Activated T-helper 1 cell treated with anti-CD3 and anti-CD28 coated beads, Interleukin-12 subunit alpha, Interleukin-12 subunit beta, Interleukin-2, Interleukin-4 antibody, amounts not matched to agents 30 ng/mL and 10 ng/mL and 1 ng/mL, durations not matched to agents 14 hours and 24 hours and 36 hours (primary cell): ENCODE measurements at regions of chr1 and their contacts with region 1.

Region 1: GRCh38 chr1:160098852-160099561 is 588 bp upstream of the IGSF8 start:
- DNase-seq: peak; percentile 93
- H3K4me3 Mint-ChIP-seq: peak overlapping the region; percentile 73
- H3K27ac Mint-ChIP-seq: peak overlapping the region; percentile 73
- H3K4me1 Mint-ChIP-seq: peaks cover 41% of the 10 kb centered on the region
- H3K27me3 Mint-ChIP-seq: peaks cover 5% of the 10 kb centered on the region

Region 2: GRCh38 chr1:159780583-159781582 is 318.1 kb before region 1 on chr1 and contains the start of gene DUSP23:
- intact Hi-C with region 1: loop called (anchors 2 kb)
- DNase-seq: peak; percentile 94
- H3K4me3 Mint-ChIP-seq: peak within 1 kb of the TSS; percentile 82
- H3K27ac Mint-ChIP-seq: peak within 1 kb of the TSS; percentile 63
- H3K4me1 Mint-ChIP-seq: peaks cover 7% of the 10 kb centered on the region
- H3K27me3 Mint-ChIP-seq: peaks cover 9% of the 10 kb centered on the region
- total RNA-seq, gene DUSP23: 22.4 and 23.4 TPM in 2 replicates

Region 3: GRCh38 chr1:160085686-160086455 is 13.1 kb before region 1 on chr1:
- intact Hi-C with region 1: loop called (anchors 1 kb)
- DNase-seq: peak; percentile 56
- H3K4me3 Mint-ChIP-seq: no peak overlapping the region
- H3K27ac Mint-ChIP-seq: no peak overlapping the region
- H3K4me1 Mint-ChIP-seq: peaks cover 17% of the 10 kb centered on the region
- H3K27me3 Mint-ChIP-seq: peaks cover 26% of the 10 kb centered on the region

Region 4: DNA sequence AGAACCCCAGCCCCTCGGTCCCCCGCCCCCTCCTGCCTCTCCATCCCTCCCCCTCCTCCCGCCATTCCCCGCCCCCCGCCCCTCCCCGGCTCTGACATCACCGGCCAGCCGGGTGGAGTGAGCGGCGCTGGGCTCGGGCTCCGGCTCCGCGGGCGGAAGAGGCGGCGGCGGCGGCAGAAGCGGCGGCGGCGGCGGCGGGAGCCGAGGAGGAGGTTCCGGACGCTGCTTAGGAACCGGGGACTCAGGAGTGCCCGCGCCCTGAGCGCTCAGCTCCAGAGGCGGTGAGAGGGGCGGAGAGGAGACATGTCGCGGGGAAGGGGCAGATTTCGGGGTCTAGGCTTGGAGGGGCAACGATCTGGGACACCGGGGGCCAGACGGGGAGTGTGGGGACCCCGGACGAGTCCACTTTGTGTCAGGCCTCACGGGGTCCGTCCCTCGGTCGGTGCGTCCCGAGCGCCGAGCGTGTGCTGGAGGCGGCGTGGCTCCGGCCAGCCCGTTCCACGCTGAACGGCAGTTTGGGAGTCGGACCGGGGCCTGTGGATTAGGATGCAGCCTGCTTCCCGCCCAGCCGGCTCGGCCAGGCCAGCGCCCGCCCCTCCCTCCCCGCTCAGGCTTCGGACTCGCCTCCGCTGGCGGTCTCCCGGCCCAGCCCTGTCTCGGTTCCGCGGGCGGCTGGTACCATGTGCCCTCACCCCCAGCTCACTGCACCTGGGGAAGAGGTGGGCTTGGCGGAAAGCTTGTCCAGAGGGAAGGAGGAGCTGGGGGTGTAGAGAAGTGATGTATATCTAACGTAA is 106.4 kb after region 1 on chr1 and contains the start of gene PEA15:
- intact Hi-C with region 1: loop called (anchors 1 kb)
- DNase-seq: peak; percentile 69
- H3K4me3 Mint-ChIP-seq: peak within 1 kb of the TSS; percentile 85
- H3K27ac Mint-ChIP-seq: peak within 1 kb of the TSS; percentile 87
- H3K4me1 Mint-ChIP-seq: peaks cover 48% of the 10 kb centered on the region
- H3K27me3 Mint-ChIP-seq: no peaks in the 10 kb centered on the region
- total RNA-seq, gene PEA15: 71.2 and 71.3 TPM in 2 replicates

Region 5: GRCh38 chr1:160284782-160285344 is 185.9 kb after region 1 on chr1 and contains the start of gene PEX19:
- intact Hi-C with region 1: loop called (anchors 1 kb)
- DNase-seq: peak; percentile 91
- H3K4me3 Mint-ChIP-seq: peak within 1 kb of the TSS; percentile 100
- H3K27ac Mint-ChIP-seq: peak within 1 kb of the TSS; percentile 96
- H3K4me1 Mint-ChIP-seq: peaks cover 19% of the 10 kb centered on the region
- H3K27me3 Mint-ChIP-seq: no peaks in the 10 kb centered on the region
- total RNA-seq, gene PEX19: 55.9 and 59.0 TPM in 2 replicates

Region 6: GRCh38 chr1:160376525-160377131 is 277.6 kb after region 1 on chr1:
- intact Hi-C with region 1: loop called (anchors 1 kb)
- DNase-seq: peak; percentile 11
- H3K4me3 Mint-ChIP-seq: no peak overlapping the region
- H3K27ac Mint-ChIP-seq: no peak overlapping the region
- H3K4me1 Mint-ChIP-seq: peaks cover 13% of the 10 kb centered on the region
- H3K27me3 Mint-ChIP-seq: no peaks in the 10 kb centered on the region